ENCODE measurements at regions of chr11 and their contacts with region 1.

Region 1: DNA sequence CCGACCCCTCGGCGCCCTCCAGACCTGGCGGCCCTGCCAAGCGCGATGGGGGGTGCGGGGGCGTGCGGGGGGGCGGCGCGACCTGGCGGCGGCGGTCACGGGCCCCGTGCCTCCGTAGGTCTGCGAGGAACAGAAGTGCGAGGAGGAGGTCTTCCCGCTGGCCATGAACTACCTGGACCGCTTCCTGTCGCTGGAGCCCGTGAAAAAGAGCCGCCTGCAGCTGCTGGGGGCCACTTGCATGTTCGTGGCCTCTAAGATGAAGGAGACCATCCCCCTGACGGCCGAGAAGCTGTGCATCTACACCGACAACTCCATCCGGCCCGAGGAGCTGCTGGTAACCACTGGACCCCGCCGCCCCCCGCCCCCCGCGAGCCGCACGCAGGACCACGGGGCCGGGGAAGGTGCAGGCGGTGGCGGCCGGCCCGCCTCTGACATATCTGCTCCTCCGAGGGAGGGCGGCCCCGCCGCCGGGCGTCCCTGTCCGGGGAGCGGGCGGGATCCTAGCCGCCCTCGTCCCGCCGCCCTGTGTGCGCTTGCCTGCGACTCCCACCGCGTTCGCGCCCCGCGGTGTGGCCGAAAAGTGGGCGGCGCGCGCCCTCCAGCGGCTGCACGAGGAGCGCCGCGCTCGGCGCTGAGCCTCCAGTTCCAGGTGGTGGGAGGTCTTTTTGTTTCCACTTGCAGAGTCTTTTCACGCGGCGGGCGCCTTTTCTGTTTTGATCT is 2.1 kb downstream of the CCND1 start:
- DNase-seq: peak; percentile 83
- ATAC-seq: peak; percentile 69 to 74

Region 2: GRCh38 chr11:69101115-69101791 is 541.8 kb before region 1 on chr11:
- intact Hi-C with region 1: loop called (anchors 2 to 5 kb)
- DNase-seq: peak; percentile 83
- ATAC-seq: peak; percentile 89 to 91

Region 3: DNA sequence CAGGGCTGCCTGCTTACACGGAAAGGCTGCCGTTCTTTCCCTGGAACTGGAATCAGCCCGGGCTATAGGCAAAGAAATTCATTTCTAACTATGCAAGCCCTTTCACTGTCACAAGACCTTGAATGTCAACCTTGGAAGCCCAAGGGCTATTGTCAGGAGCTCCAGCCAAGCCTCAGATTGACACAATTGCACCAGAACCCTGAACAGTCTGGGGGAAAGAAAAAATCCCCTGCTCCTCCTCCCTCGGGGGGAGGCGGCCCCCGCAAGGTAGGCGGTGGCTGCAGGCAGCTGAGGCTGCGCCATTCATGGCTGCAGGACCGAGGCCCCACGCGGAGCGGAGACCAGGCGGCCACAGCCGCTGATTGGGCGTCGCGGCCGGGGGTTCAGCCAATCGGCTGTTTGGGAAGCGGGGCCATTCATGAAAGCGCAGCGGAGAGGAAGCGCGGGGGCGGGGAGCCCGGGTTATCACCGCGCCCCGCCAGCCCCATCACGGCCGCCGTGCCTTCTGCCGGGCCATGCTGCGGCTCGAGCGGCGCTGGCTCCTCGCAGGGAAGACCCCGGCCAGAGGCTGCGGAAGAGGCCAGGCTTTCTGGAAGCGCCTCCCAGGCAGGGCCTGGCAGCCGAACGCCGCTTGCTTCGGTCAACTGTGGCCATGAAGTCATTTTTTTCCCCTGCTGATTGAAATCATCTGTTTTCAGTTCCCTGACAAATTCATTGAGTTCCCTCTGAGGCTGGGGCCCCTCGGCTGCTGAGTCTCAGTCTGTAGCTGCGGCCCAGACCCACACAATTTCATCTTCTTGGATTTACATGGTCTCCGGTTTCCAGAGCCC is 199.7 kb before region 1 on chr11:
- intact Hi-C with region 1: loop called in 1 of 2 experiments (anchors 5 kb)
- DNase-seq: peak; percentile 95
- ATAC-seq: peak; percentile 91 to 94

Region 4: DNA sequence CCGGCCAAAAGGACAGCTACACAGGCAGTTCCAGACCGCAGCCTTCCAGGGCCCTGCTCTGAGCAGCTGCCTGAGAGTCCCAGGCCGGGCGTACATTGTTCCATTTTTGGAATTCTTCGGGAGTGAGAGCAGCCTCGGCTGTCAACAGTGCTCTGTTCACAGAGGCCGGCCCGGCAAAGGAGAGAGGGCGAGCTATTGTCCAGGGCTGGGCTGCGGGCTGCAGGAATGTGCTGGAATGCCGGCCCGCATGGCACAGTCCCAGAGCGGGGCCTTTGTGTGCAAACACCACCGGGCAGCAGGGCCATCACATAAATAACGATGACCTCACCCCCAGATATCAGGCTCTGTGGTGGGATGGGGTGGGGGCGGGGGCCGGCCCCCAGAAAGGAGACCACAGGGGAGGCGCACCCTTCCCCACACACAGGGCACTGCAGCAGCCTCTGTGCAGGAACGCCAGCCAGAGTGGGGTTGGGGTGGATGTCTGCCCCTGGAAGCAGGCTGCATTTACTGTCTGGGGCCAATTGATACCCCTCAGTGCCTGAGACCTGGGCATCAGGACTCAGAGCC is 145.8 kb before region 1 on chr11:
- intact Hi-C with region 1: loop called in 1 of 2 experiments (anchors 5 kb)
- DNase-seq: peak; percentile 86
- ATAC-seq: peak; percentile 95 to 97

Measured in left cardiac atrium (tissue), 4 donors.